MCF 10A (cell line): ENCODE measurements at regions of chr9 and their contacts with region 1.

Region 1: DNA sequence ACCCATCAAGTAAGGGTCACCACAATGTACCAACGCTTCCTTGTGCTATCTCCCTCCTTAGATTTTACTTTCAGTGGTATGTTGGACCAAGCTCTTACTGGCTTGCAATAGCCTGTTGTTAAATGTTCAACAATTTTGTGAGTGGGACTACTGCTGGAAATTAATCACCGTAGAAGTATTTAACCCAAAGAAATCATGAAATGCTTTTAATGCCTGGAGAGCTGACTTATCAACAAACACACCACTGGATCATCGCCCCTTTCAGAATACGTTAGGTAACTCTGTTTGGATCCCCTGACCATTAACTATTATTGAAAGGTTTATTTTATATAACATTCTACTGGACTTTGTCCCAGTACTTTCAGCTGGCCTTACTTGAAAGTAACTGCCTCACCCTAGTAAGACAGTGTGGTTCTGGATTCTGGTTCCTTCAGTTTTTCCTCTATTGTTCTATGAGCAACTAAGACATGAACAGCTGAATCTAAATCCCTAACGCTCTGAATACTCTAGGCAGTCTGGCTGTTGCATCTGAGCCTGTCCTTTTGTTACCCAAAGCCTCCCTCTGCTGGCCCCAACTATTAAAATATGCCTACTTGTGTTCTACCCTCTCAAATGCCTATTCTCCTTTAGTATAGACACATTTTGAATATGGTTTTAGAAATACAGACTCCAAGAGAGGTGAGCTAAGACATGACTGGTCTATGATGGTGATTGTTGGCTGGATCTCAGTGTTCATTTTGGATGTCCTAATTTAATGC is 1203.4 kb upstream of the DMAC1 start:
- DNase-seq: peak; percentile 13
- H3K4me3 Mint-ChIP-seq: no peak overlapping the region
- H3K27ac Mint-ChIP-seq: no peak overlapping the region
- H3K4me1 Mint-ChIP-seq: no peaks in the 10 kb centered on the region
- H3K27me3 Mint-ChIP-seq: no peaks in the 10 kb centered on the region
- CTCF ChIP-seq: peak; percentile 26

Region 2: DNA sequence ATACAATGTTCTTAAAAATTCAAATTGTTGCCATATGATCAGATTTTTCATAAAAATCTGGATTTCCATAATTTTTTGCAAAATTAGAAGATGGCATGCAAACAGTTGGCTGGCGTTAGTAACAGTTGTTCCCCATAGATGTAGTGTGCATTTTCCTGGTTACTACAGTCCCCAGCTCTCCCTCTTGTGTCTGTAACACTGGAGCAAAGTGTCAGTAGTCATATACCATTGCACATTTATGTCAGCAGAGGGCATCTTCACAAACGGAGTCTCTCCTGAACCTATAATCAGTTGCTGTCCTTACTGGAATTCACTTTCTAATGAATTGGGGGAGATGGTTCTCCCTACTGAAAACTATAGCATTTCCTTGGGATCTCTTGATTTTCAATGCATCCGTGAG is 1158.8 kb before region 1 on chr9:
- CTCF ChIA-PET with region 1: no interaction called
- POLR2A ChIA-PET with region 1: no interaction called
- intact Hi-C with region 1: loop called (anchors 1 kb)
- DNase-seq: peak; percentile 27
- H3K4me3 Mint-ChIP-seq: no peak overlapping the region
- H3K27ac Mint-ChIP-seq: no peak overlapping the region
- H3K4me1 Mint-ChIP-seq: no peaks in the 10 kb centered on the region
- H3K27me3 Mint-ChIP-seq: no peaks in the 10 kb centered on the region
- CTCF ChIP-seq: peak; percentile 21

Region 3: DNA sequence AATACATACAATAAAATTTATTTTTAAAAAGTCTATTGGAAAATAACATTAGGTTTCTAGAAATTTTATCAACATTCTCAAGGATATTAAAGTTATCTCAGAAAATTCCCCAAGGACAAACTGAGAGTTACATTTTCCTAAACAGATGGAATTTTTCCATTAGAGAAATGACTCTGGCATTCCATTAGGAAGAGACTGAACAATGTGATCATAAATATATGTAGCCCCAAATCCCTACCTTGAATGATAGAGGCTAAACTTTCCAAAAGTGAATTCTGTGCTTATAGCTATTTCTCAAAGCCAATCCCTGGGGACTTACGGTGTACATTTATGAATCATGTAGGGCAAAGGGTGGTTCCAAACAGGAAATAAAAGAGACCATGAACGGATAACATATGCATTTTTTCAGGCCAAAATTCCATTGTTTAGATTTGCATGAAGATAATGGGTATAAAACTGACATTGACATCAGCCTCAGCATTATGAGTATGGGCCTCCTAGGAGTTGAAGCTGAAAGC is 22.4 kb before region 1 on chr9:
- CTCF ChIA-PET with region 1: no interaction called
- POLR2A ChIA-PET with region 1: no interaction called
- intact Hi-C with region 1: no loop called
- DNase-seq: no peak
- H3K4me3 Mint-ChIP-seq: no peak overlapping the region
- H3K27ac Mint-ChIP-seq: no peak overlapping the region
- H3K4me1 Mint-ChIP-seq: no peaks in the 10 kb centered on the region
- H3K27me3 Mint-ChIP-seq: no peaks in the 10 kb centered on the region
- CTCF ChIP-seq: no peak

Region 4: GRCh38 chr9:9719373-9720112 is 716.5 kb after region 1 on chr9:
- CTCF ChIA-PET with region 1: no interaction called
- POLR2A ChIA-PET with region 1: no interaction called
- intact Hi-C with region 1: no loop called
- DNase-seq: no peak
- H3K4me3 Mint-ChIP-seq: no peak overlapping the region
- H3K27ac Mint-ChIP-seq: no peak overlapping the region
- H3K4me1 Mint-ChIP-seq: no peaks in the 10 kb centered on the region
- H3K27me3 Mint-ChIP-seq: no peaks in the 10 kb centered on the region
- CTCF ChIP-seq: no peak